ENCODE measurements at regions of chr14 and their contacts with region 1.

Region 1: DNA sequence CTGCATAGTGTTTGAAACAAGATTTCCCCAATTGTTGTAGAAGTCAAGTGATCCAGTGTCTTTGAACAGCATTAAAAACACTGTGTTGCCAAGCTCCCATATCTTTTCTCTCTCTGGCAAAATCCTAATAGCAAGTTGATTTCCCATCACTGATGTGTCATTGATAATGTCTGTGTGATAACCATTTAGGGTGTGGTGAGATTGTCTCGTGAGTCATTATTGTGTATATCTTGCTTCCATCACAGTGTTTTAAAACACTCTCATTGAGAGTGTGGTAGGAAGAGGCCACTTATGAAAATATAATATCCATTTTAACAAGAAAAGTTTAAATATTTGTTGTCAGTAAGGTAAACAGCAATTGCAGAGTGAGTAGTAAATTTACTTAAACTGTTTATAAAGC is 74.7 kb downstream of the PRORP start:
- DNase-seq: peak; percentile 11
- H3K4me3 ChIP-seq: no peak overlapping the region
- H3K27me3 ChIP-seq: no peaks in the 10 kb centered on the region
- CTCF ChIP-seq: no peak

Region 2: GRCh38 chr14:35319509-35319908 is 122.5 kb after region 1 on chr14:
- CTCF ChIA-PET with region 1: no interaction called
- POLR2A ChIA-PET with region 1: interaction called, 10 read pairs
- DNase-seq: no peak
- H3K4me3 ChIP-seq: no peak overlapping the region
- H3K27me3 ChIP-seq: no peaks in the 10 kb centered on the region
- CTCF ChIP-seq: no peak